AG04450 (cell line): ENCODE measurements at regions of chr17 and their contacts with region 1.

Region 1: DNA sequence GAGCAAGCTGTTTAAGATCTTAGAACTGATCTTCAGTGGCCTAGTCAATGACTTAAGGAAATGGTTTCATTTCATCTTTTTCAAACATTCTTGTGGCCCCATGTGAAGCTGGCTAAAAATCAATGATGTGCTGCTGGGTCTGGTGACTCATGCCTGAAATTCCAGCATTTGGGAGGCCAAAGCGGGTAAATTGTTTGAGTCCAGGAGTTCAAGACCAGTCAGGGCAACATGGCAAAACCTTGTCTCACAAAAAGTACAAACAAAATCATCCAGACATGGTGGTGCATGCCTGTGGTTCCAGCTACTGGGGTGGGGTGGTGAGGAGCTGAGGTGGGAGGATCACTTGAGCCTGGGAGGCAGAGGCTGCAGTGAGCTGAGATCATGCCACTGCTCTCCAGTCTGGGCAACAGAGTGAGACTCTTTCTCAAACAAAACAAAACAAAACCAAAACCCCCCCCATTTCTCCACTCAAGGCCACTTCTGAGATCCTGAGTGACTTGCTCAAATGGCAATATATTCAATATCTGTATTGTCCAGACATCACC is 17.4 kb upstream of the COL1A1 start:
- DNase-seq: peak; percentile 89
- H3K4me3 ChIP-seq: peak overlapping the region; percentile 29
- H3K27ac ChIP-seq: peak overlapping the region; percentile 97
- H3K27me3 ChIP-seq: no peaks in the 10 kb centered on the region
- CTCF ChIP-seq: no peak

Region 2: GRCh38 chr17:50101346-50102163 is 117.3 kb before region 1 on chr17:
- CTCF ChIA-PET with region 1: no interaction called
- POLR2A ChIA-PET with region 1: no interaction called
- DNase-seq: no peak
- H3K4me3 ChIP-seq: no peak overlapping the region
- H3K27ac ChIP-seq: no peak overlapping the region
- H3K27me3 ChIP-seq: no peaks in the 10 kb centered on the region
- CTCF ChIP-seq: no peak

Region 3: GRCh38 chr17:50238601-50239280 is 19.9 kb after region 1 on chr17:
- CTCF ChIA-PET with region 1: interaction called, 6 read pairs
- POLR2A ChIA-PET with region 1: interaction called, 13 read pairs
- DNase-seq: no peak
- H3K4me3 ChIP-seq: no peak overlapping the region
- H3K27ac ChIP-seq: no peak overlapping the region
- H3K27me3 ChIP-seq: no peaks in the 10 kb centered on the region
- CTCF ChIP-seq: no peak